Prostate gland (tissue), 2 donors: ENCODE measurements at regions of chr10 and their contacts with region 1.

Region 1: GRCh38 chr10:102009801-102010425 is 46.1 kb downstream of the ARMH3 start:
- DNase-seq: peak; percentile 68
- H3K4me3 ChIP-seq: no peak overlapping the region
- H3K27ac ChIP-seq: no peak overlapping the region
- H3K4me1 ChIP-seq: no peaks in the 10 kb centered on the region
- H3K27me3 ChIP-seq: no peaks in the 10 kb centered on the region
- CTCF ChIP-seq: peak; percentile 66 to 92 (median 81)
- POLR2A ChIP-seq: no peak

Region 2: GRCh38 chr10:101258179-101258885 is 751.6 kb before region 1 on chr10:
- intact Hi-C with region 1: no loop called
- DNase-seq: no peak
- H3K4me3 ChIP-seq: no peak overlapping the region
- H3K27ac ChIP-seq: no peak overlapping the region
- H3K4me1 ChIP-seq: no peaks in the 10 kb centered on the region
- H3K27me3 ChIP-seq: no peaks in the 10 kb centered on the region
- CTCF ChIP-seq: no peak
- POLR2A ChIP-seq: no peak

Region 3: DNA sequence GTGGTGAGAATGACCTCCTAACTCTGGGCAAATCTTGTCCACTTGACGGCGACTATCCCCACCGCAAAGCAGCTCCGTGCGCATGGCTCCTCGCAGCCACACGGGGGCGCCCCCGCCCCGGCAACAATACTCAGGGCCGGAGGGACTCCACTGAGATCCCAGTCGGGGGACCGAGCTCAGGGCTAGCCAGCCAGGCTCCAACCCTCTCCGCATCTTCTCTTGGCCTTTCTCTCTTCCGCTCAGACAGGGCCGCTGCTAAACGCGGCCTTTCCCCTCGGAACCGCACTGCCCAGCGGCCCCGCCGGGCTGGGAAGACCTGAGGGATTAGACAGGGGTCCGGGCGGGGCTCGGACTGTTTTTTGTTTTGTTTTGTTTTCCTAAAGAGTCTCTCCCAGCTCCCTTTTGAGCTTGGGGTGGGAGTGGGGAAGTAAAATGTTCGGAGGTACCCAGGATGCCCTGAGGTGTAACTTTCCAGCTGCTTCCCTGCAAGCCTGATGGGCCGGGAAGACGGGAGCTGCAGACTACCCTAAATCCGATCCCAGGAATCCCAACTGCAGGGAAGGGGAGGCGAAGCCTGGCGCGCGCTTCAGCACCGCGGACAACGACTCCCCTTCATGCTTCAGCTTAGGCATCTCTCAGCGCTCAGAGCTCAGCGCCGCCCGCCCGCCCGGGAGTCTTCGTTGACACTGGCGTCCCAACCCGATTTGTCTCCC is 169.0 kb before region 1 on chr10:
- intact Hi-C with region 1: loop called (anchors 5 kb)
- DNase-seq: peak; percentile 55
- H3K4me3 ChIP-seq: no peak overlapping the region
- H3K27ac ChIP-seq: no peak overlapping the region
- H3K4me1 ChIP-seq: no peaks in the 10 kb centered on the region
- H3K27me3 ChIP-seq: no peaks in the 10 kb centered on the region
- CTCF ChIP-seq: peak; percentile 50 to 82 (median 70)
- POLR2A ChIP-seq: no peak

Region 4: DNA sequence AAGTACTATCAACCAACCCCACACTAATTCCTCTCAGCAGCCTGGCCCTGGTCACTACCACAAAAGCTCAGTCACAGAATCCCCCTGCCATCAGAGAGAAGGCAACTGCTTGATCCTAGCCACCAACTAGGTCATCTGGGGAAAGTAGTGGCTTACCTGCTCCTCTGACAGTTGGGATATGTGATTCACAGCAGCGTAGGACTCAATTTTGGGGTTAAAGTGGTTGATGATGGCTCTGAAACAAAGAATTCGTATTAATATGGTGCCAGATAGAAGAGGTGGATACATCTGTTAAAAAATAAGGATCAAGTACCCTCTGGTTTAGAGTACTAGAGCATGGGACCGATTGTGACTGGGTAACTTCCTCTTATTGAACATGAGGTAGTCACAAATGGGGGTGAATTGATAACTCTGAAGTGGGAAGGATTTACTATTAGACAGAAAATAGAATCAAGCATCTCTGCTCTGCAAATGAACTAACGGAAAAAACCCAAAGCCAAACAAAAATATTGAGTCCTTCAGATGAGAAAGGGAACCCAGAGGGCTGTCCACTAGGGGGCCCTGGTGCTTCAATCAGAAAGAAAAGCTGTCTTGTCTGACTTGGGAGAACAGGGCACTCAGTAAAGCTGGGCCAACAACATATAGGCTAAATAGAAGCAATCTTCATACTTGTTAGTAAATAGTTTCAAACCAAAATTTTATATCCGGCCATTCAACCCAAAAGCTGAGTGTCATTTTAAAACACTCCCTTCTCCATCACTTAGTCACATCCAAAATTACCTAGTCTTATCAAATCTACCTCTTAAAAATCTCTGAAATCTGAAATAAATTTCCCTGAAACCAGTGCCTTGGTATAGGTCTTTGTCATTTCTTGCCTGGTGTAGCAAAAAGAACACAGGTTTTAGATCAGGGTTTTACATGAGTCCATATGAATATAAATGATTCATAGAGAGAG is 120.4 kb before region 1 on chr10:
- intact Hi-C with region 1: loop called (anchors 5 kb)
- DNase-seq: peak; percentile 62
- H3K4me3 ChIP-seq: no peak overlapping the region
- H3K27ac ChIP-seq: no peak overlapping the region
- H3K4me1 ChIP-seq: no peaks in the 10 kb centered on the region
- H3K27me3 ChIP-seq: no peaks in the 10 kb centered on the region
- CTCF ChIP-seq: peak; percentile 39 to 72 (median 66)
- POLR2A ChIP-seq: no peak

Region 5: DNA sequence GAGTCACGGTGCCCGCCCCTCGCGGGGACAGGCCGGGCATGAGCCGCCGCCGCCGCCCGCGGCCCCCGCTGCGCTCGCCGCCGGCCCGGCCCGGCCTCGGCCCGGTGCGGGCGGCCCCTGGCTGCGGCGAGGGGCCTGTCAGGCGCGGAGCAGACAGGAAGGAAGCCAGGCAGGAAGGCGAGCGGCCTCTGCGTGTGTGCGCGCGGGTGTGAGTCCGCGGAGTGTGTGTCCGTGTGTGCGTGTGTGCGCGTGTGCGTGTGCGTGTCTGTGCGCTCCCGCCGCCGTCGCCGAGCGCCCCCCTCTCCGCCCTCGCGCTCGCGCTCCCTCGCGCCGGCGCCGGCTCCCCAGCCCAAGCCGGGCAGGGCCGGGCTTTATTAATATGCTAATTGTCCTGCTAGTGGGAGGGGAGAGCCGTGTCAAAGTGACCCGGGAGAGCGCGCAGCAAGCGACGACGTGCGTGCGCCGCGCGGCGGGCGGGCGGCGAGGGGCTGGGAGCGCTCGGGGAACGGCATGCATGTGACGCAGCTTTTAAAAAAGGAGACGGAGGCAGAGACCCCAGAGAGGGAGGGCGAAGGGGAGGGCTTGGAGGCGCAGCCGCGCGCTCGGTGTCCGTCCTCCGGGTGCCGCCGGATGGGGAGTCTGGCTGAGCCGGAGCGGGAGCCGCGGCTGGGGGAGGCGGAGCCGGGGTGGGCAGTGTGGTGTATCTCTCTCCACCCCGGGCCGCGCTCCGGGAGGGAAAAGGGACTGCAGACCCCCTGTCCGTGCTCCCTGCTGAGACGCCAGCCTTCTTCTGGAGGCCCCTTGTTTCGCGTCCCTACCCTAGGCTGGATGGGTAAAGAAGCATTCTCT is 110.5 kb after region 1 on chr10 and contains the start of gene LDB1:
- intact Hi-C with region 1: no loop called
- DNase-seq: peak; percentile 78
- H3K4me3 ChIP-seq: peak within 1 kb of the TSS; percentile 70 to 81
- H3K27ac ChIP-seq: peak within 1 kb of the TSS; percentile 92 to 96
- H3K4me1 ChIP-seq: peaks cover 30% of the 10 kb centered on the region
- H3K27me3 ChIP-seq: no peaks in the 10 kb centered on the region
- CTCF ChIP-seq: peak in 2 of 4 experiments; percentile 28 to 41
- POLR2A ChIP-seq: peak; percentile 100
- total RNA-seq, gene LDB1: 55.0 to 91.5 TPM